Heart right ventricle (tissue), 16 donors: ENCODE measurements at regions of chr20 and their contacts with region 1.

Region 1: GRCh38 chr20:62143118-62143973 is at the starts of genes PSMA7 and SS18L1:
- DNase-seq: peak; percentile 88 to 90
- ATAC-seq: peak; percentile 88 to 95 (median 92)
- H3K4me3 ChIP-seq: peak within 1 kb of the TSS; percentile 67 to 96 (median 86)
- H3K27ac ChIP-seq: peak within 1 kb of the TSS; percentile 86 to 100 (median 96)
- H3K4me1 ChIP-seq: peaks cover 8 to 46% (median 38%) of the 10 kb centered on the region in 9 donors
- H3K27me3 ChIP-seq: no peaks in the 10 kb centered on the region
- CTCF ChIP-seq: no peak
- total RNA-seq, gene PSMA7: 172 to 296 (median 200) TPM
- total RNA-seq, gene SS18L1: 6.6 to 11.7 (median 7.4) TPM

Region 2: GRCh38 chr20:62010551-62011402 is 132.6 kb before region 1 on chr20:
- intact Hi-C with region 1: loop called in 6 of 10 experiments (anchors 5 kb)
- DNase-seq: peak; percentile 40 to 53
- ATAC-seq: peak in 7 of 8 donors; percentile 53 to 76 (median 65)
- H3K4me3 ChIP-seq: no peak overlapping the region
- H3K27ac ChIP-seq: no peak overlapping the region
- H3K4me1 ChIP-seq: peaks cover 0 to 11% (median 4%) of the 10 kb centered on the region in 9 donors
- H3K27me3 ChIP-seq: no peaks in the 10 kb centered on the region
- CTCF ChIP-seq: peak in 8 of 9 donors; percentile 39 to 78 (median 72)

Region 3: GRCh38 chr20:62025832-62026563 is 117.3 kb before region 1 on chr20:
- intact Hi-C with region 1: loop called in 7 of 10 experiments (anchors 5 kb)
- DNase-seq: peak in 1 of 2 donors; percentile 63
- ATAC-seq: peak; percentile 60 to 89 (median 83)
- H3K4me3 ChIP-seq: peak overlapping the region in 1 of 10 donors; percentile 12
- H3K27ac ChIP-seq: peak overlapping the region in 4 of 10 donors; percentile 34 to 61 (median 50)
- H3K4me1 ChIP-seq: peaks cover 23 to 52% (median 38%) of the 10 kb centered on the region in 9 donors
- H3K27me3 ChIP-seq: no peaks in the 10 kb centered on the region
- CTCF ChIP-seq: peak; percentile 27 to 79 (median 64)

Region 4: GRCh38 chr20:62121776-62122631 is 21.3 kb before region 1 on chr20 and contains the start of gene LSM14B:
- intact Hi-C with region 1: loop called in 1 of 10 experiments (anchors 2 kb)
- DNase-seq: peak; percentile 95 to 98
- ATAC-seq: peak; percentile 86 to 94 (median 90)
- H3K4me3 ChIP-seq: peak within 1 kb of the TSS; percentile 65 to 94 (median 81)
- H3K27ac ChIP-seq: peak within 1 kb of the TSS; percentile 85 to 99 (median 94)
- H3K4me1 ChIP-seq: peaks cover 5 to 57% (median 41%) of the 10 kb centered on the region in 9 donors
- H3K27me3 ChIP-seq: peaks cover 0 to 15% (median 11%) of the 10 kb centered on the region in 7 donors
- CTCF ChIP-seq: no peak
- total RNA-seq, gene LSM14B: 50.8 to 63.7 (median 60.5) TPM

Region 5: GRCh38 chr20:62793912-62794724 is 650.8 kb after region 1 on chr20:
- intact Hi-C with region 1: loop called in 1 of 10 experiments (anchors 5 kb)
- DNase-seq: peak; percentile 97 to 99
- ATAC-seq: peak; percentile 91 to 95 (median 92)
- H3K4me3 ChIP-seq: peak overlapping the region; percentile 14 to 97 (median 69)
- H3K27ac ChIP-seq: peak overlapping the region; percentile 70 to 96 (median 92)
- H3K4me1 ChIP-seq: peaks cover 6 to 50% (median 38%) of the 10 kb centered on the region in 9 donors
- H3K27me3 ChIP-seq: no peaks in the 10 kb centered on the region
- CTCF ChIP-seq: no peak